AG04450 (cell line): ENCODE measurements at regions of chr10 and their contacts with region 1.

Region 1: DNA sequence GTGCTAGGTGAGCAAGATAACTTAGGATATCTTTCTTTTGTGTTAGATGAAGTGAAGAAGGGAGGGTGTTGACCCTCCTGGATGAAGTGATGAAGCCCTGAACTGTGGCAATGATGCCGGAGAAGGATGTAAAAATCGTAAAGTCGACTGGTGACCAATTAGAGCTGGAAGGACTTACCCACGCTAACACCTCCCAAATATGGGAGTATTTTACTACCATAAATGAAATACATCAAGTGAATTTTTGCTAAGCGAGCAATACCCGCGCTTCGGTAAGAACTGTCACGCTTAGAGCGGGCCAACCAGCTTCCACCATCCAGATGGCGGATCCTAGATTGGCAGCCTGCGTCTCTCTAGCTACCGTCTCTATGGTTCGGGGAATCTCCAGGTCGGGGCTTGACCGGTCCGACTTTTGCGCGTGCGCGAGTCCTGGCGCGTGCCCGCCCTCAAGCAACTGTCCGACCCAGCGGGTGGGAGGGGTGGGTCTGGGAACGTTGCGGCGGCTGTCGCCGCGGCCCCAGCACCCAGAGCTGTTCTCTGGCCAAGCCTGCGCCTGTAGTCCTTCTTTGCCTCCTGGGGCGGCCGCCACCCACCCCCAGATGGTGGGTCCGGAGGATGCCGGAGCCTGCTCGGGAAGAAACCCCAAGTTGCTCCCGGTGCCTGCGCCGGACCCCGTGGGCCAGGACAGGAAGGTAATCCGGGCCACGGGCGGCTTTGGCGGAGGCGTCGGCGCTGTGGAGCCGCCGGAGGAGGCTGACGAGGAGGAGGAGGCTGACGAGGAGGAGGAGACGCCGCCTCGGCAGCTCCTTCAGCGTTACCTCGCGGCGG is at the start of gene TBC1D12:
- DNase-seq: peak; percentile 90
- H3K4me3 ChIP-seq: peak within 1 kb of the TSS; percentile 77
- H3K27ac ChIP-seq: peak within 1 kb of the TSS; percentile 83
- H3K27me3 ChIP-seq: no peaks in the 10 kb centered on the region
- CTCF ChIP-seq: no peak
- polyA plus RNA-seq, gene TBC1D12: 4.1 and 4.7 TPM in 2 replicates

Region 2: DNA sequence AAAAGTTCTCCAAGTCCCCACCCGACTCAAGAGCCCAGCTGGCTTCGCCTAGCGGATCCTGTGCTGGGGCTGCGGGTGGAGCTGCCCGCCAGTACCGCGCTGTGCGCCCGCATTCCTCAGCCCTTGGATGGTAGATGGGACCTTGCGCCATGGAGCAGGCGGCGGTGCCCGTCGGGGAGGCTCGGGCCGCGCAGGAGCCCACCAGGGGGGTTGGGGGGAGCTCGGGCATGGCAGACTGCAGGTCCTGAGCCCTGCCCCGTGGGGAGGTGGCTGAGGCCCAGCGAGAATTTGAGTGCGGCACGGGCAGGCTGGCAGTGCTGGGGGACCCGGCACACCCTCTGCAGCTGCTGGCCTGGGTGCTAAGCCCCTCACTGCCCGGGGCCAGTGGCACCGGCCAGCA is 57.2 kb after region 1 on chr10:
- CTCF ChIA-PET with region 1: interaction called, 11 read pairs
- POLR2A ChIA-PET with region 1: no interaction called
- DNase-seq: no peak
- H3K4me3 ChIP-seq: no peak overlapping the region
- H3K27ac ChIP-seq: no peak overlapping the region
- H3K27me3 ChIP-seq: no peaks in the 10 kb centered on the region
- CTCF ChIP-seq: no peak

Region 3: DNA sequence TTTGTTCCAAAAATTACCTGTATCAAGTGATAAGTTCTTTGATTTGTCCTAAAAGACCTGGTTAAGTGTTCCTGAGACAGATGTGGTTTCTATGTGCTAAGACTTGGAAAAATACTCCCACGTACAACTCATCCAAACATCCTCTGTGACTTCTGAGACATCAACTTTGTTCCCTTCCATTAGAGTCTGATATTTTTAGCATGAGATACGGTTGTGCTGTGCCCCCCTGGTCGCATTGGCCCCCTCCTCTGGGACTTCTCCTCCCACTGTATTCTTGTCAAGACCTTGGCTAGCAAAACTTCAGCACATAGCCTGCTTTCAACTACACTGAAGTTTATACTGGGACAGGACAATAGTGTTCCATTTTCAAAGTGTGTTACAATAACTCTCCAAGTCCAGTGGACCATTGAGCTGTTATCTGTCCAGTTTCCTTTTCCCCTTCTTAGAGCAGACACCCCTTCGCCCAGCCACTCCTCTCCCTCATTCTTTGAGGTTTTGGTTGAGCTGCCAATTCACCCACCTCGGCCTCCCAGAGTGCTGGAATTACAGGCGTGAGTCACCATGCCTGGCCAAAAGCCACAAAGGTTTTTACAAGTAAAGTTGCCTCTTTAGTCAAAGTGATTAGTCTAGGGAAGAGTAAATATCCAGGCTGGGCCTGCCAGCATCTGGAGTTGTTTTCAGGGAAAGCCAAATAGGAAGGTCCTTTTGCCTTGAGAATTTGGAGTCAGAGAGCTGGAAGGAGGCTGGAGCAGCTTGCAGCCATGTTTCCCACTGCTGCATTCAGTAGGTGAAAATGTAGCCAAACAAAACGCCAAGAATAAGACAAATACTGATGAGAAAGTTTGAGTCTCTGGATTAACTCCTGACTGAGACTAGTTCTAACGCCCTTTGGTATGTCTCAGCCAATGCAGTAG is 906.4 kb after region 1 on chr10:
- CTCF ChIA-PET with region 1: no interaction called
- POLR2A ChIA-PET with region 1: no interaction called
- DNase-seq: peak; percentile 95
- H3K4me3 ChIP-seq: peak overlapping the region; percentile 23
- H3K27ac ChIP-seq: peak overlapping the region; percentile 89
- H3K27me3 ChIP-seq: no peaks in the 10 kb centered on the region
- CTCF ChIP-seq: no peak